Colonic mucosa (tissue), 4 donors: ENCODE measurements at regions of chr17 and their contacts with region 1.

Region 1: DNA sequence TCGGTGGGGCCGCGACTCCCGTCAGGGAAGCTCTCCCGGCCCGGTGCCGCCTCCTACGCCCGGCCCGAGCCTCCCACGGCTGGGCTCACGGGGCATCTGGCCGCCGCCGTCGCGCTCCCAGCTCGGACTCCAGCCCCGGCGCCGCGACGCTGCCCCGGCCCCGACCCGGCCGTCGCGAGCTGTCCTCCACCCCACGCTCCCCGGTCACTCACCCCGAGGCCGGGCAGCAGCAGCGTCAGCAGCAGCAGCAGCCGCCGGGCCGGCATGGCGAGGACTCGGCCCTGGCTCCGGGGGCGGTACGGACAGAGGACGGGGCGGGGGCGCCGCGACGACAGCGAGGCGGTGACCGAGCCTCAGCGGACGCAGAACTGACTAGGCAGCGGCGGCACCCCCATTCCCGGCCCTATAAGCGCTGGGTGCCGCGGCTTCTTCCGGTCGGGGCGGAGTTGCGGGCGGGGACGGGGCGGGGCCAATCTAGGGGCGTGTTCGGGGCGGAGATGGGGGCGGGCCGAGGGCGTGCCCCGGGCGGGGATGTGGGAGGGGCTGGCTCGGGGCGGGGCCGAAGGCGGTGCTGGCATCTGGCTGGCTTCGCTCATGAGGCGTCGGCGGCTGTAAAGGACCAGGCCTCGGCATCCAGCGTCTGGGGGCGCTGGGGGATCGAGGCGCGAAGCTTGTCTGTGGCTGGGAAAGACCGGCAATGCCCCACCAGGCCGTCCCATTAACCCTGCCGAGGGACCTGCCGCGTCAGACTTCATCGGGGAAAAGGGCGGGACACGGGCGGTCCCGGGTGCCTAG is at the start of gene ERN1:
- DNase-seq: peak; percentile 95
- H3K4me3 ChIP-seq: peak within 1 kb of the TSS; percentile 88
- H3K27ac ChIP-seq: peak within 1 kb of the TSS; percentile 97
- H3K4me1 ChIP-seq: peaks cover 5% of the 10 kb centered on the region
- H3K27me3 ChIP-seq: no peaks in the 10 kb centered on the region
- CTCF ChIP-seq: no peak
- total RNA-seq, gene ERN1: 19.2 to 19.6 TPM

Region 2: DNA sequence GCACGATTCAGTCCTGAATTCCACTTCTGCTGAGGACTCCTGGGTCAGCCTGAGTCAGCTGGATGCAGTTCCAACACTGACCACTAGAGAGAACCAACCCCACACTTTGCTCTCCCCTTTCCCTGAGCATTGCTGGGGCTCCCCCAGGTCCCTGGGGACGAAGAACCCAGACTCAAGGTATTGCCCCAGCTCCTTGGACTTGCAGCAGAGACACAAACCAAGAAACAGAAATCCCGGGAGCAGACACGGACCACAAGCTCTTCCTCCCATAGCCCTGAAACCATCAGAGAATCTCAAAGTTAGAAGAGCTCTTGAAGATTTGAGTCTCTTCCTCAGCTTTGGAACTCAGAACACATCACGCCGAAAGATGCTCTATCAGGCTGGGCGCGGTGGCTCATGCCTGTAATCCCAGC is 210.6 kb before region 1 on chr17:
- intact Hi-C with region 1: loop called (anchors 10 kb)
- DNase-seq: peak; percentile 65
- H3K4me3 ChIP-seq: no peak overlapping the region
- H3K27ac ChIP-seq: no peak overlapping the region
- H3K4me1 ChIP-seq: no peaks in the 10 kb centered on the region
- H3K27me3 ChIP-seq: no peaks in the 10 kb centered on the region
- CTCF ChIP-seq: peak; percentile 97

Region 3: DNA sequence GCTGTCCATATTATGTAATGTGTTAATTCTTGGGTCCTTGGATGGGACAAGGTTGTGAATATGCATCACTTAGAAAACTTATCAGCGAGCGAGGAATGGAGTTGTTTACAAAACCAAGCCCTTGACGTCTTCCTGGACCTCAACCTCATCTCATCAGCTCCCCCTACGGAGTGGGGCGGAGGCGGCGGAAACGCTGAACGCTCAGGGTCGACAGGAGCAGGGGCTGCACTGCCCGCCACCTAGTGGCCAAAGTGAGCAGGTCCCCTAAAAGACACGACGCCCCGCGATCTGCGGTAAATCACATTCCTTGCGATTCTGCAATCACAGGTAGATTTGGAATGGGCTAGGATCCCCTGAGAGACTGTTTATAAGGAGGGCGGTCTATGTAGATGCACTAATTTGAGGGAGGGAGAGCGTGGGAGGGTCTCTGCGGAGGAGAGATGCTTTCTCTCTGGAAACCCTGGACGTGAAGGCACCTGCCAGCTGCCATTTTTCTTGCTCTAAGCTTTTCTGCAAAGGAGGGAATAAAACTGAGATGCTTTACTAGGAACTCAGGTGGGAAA is 104.1 kb before region 1 on chr17:
- intact Hi-C with region 1: loop called (anchors 2 kb)
- DNase-seq: peak; percentile 79
- H3K4me3 ChIP-seq: no peak overlapping the region
- H3K27ac ChIP-seq: peak overlapping the region; percentile 44
- H3K4me1 ChIP-seq: peaks cover 8% of the 10 kb centered on the region
- H3K27me3 ChIP-seq: no peaks in the 10 kb centered on the region
- CTCF ChIP-seq: peak; percentile 92

Region 4: DNA sequence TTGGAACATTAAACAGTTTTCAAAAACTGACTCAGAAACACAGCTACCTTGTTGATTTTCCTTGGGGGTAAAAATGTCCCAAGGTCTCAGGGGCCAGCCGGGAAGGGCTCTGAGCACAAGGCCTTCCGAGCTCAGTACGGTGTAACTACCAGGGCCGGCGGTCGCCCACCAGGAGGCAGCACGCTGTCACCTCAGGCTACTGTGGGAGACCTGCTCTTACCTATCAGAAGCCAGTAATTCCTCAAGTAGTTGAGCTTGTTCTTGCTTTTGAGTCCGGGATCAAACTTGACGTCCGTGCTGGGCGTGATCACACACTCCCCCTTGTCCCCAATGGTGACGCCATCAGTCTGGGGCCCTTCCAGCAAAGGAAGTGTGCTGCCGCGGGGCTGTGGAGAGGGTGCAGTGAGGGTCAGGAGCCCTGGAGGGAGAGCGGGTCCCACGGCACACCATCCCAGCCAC is 66.2 kb before region 1 on chr17:
- intact Hi-C with region 1: loop called (anchors 2 kb)
- DNase-seq: peak; percentile 74
- H3K4me3 ChIP-seq: no peak overlapping the region
- H3K27ac ChIP-seq: peak overlapping the region; percentile 39
- H3K4me1 ChIP-seq: no peaks in the 10 kb centered on the region
- H3K27me3 ChIP-seq: no peaks in the 10 kb centered on the region
- CTCF ChIP-seq: peak; percentile 57

Region 5: GRCh38 chr17:64216338-64217248 is 86.6 kb after region 1 on chr17:
- intact Hi-C with region 1: no loop called
- DNase-seq: peak; percentile 66
- H3K4me3 ChIP-seq: no peak overlapping the region
- H3K27ac ChIP-seq: peak overlapping the region; percentile 62
- H3K4me1 ChIP-seq: peaks cover 9% of the 10 kb centered on the region
- H3K27me3 ChIP-seq: no peaks in the 10 kb centered on the region
- CTCF ChIP-seq: no peak